Activated CD8-positive, alpha-beta T cell treated with anti-CD3 and anti-CD28 coated beads for 36 hours (primary cell): ENCODE measurements at regions of chr9 and their contacts with region 1.

Region 1: GRCh38 chr9:71819115-71819739 is 50.9 kb upstream of the CEMIP2 start:
- DNase-seq: peak; percentile 61
- ATAC-seq: no peak
- H3K4me3 Mint-ChIP-seq: no peak overlapping the region
- H3K27ac Mint-ChIP-seq: no peak overlapping the region
- H3K4me1 Mint-ChIP-seq: peaks cover 16% of the 10 kb centered on the region
- H3K27me3 Mint-ChIP-seq: no peaks in the 10 kb centered on the region
- CTCF ChIP-seq: peak; percentile 91

Region 2: DNA sequence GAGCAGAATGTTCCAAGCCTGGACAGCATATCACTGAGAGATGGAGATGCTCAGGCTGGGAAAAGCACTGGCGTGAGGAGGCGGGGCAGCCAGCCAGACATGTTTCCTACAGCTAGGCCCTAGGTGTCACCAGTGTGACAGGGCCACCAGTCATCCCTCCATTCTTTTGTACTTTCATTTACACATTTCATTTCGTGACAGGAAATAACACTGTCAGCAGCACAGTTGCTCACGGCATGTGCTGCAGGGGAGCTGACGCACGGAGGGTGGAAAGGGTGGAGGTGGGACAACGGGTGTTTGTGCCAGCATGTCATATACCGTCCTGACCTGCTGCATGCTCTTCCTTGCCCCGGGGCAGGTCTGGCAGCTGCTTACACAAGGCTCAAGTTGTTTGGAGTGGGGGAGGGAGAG is 36.1 kb before region 1 on chr9:
- CTCF ChIA-PET with region 1: interaction called, 12 read pairs
- POLR2A ChIA-PET with region 1: no interaction called
- intact Hi-C with region 1: no loop called
- DNase-seq: peak; percentile 94
- ATAC-seq: peak; percentile 91
- H3K4me3 Mint-ChIP-seq: peak overlapping the region; percentile 58
- H3K27ac Mint-ChIP-seq: peak overlapping the region; percentile 97
- H3K4me1 Mint-ChIP-seq: peaks cover 51% of the 10 kb centered on the region
- H3K27me3 Mint-ChIP-seq: no peaks in the 10 kb centered on the region
- CTCF ChIP-seq: no peak

Region 3: GRCh38 chr9:71853084-71853483 is 33.9 kb after region 1 on chr9:
- CTCF ChIA-PET with region 1: interaction called, 12 read pairs
- POLR2A ChIA-PET with region 1: no interaction called
- intact Hi-C with region 1: no loop called
- DNase-seq: no peak
- ATAC-seq: peak; percentile 85
- H3K4me3 Mint-ChIP-seq: no peak overlapping the region
- H3K27ac Mint-ChIP-seq: peak overlapping the region; percentile 59
- H3K4me1 Mint-ChIP-seq: peaks cover 9% of the 10 kb centered on the region
- H3K27me3 Mint-ChIP-seq: no peaks in the 10 kb centered on the region
- CTCF ChIP-seq: no peak

Region 4: GRCh38 chr9:71911253-71912074 is 92.2 kb after region 1 on chr9 and contains the start of gene C9orf85:
- CTCF ChIA-PET with region 1: interaction called, 10 read pairs
- POLR2A ChIA-PET with region 1: no interaction called
- intact Hi-C with region 1: loop called (anchors 5 kb)
- DNase-seq: peak; percentile 99
- ATAC-seq: peak; percentile 95
- H3K4me3 Mint-ChIP-seq: peak within 1 kb of the TSS; percentile 100
- H3K27ac Mint-ChIP-seq: peak within 1 kb of the TSS; percentile 97
- H3K4me1 Mint-ChIP-seq: peaks cover 61% of the 10 kb centered on the region
- H3K27me3 Mint-ChIP-seq: no peaks in the 10 kb centered on the region
- CTCF ChIP-seq: no peak
- total RNA-seq, gene C9orf85: 7.6 to 8.9 TPM

Region 5: GRCh38 chr9:71916834-71917534 is 97.8 kb after region 1 on chr9:
- CTCF ChIA-PET with region 1: interaction called, 10 read pairs
- POLR2A ChIA-PET with region 1: no interaction called
- intact Hi-C with region 1: loop called (anchors 5 kb)
- DNase-seq: peak; percentile 37
- ATAC-seq: peak; percentile 85
- H3K4me3 Mint-ChIP-seq: no peak overlapping the region
- H3K27ac Mint-ChIP-seq: no peak overlapping the region
- H3K4me1 Mint-ChIP-seq: peaks cover 46% of the 10 kb centered on the region
- H3K27me3 Mint-ChIP-seq: no peaks in the 10 kb centered on the region
- CTCF ChIP-seq: no peak

Region 6: GRCh38 chr9:72022841-72023240 is 203.6 kb after region 1 on chr9:
- CTCF ChIA-PET with region 1: interaction called, 63 read pairs
- POLR2A ChIA-PET with region 1: no interaction called
- intact Hi-C with region 1: no loop called
- DNase-seq: no peak
- ATAC-seq: no peak
- H3K4me3 Mint-ChIP-seq: no peak overlapping the region
- H3K27ac Mint-ChIP-seq: no peak overlapping the region
- H3K4me1 Mint-ChIP-seq: no peaks in the 10 kb centered on the region
- H3K27me3 Mint-ChIP-seq: no peaks in the 10 kb centered on the region
- CTCF ChIP-seq: no peak